ENCODE measurements at regions of chr15 and their contacts with region 1.

Region 1: GRCh38 chr15:23606226-23606625 is 40.8 kb downstream of the MKRN3 start:
- DNase-seq: no peak
- H3K4me3 ChIP-seq: no peak overlapping the region
- H3K27ac ChIP-seq: no peak overlapping the region
- H3K4me1 ChIP-seq: no peaks in the 10 kb centered on the region
- H3K27me3 ChIP-seq: 0 out of 2 replicates have a peak, but pooled peaks cover 2% of the 10 kb centered on the region
- CTCF ChIP-seq: no peak

Region 2: GRCh38 chr15:22980189-22981050 is 625.8 kb before region 1 on chr15 and contains the start of gene CYFIP1:
- CTCF ChIA-PET with region 1: no interaction called
- POLR2A ChIA-PET with region 1: no interaction called
- intact Hi-C with region 1: no loop called
- DNase-seq: peak; percentile 66 to 90
- H3K4me3 ChIP-seq: peak within 1 kb of the TSS; percentile 77
- H3K27ac ChIP-seq: peak within 1 kb of the TSS; percentile 33; the same call in 1 of the 2 replicates
- H3K4me1 ChIP-seq: 0 out of 2 replicates have a peak, but pooled peaks cover 4% of the 10 kb centered on the region
- H3K27me3 ChIP-seq: no peaks in the 10 kb centered on the region
- CTCF ChIP-seq: no peak
- total RNA-seq, gene CYFIP1: 114 TPM in 2 replicates

Region 3: DNA sequence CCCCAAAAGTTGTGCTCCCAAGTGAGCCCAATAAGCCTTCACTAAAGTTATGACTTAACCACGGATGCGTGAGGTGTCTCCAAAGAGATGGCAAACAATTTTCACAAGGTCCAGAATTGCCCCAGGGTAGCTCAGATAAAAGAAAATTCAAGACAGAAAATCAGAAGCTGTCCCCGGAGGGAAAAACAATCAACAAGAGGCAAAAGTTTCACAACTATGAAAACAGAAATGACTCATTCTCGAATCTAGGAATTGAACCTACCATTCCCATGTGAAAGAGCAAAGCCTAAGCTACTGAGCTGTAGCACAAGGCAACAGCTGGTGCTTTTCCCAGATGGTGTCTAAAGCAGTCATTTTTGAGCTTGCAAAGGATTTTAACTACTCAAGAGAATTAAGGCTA is 74.2 kb before region 1 on chr15:
- CTCF ChIA-PET with region 1: no interaction called
- POLR2A ChIA-PET with region 1: no interaction called
- intact Hi-C with region 1: no loop called
- DNase-seq: peak in 1 of 2 experiments; percentile 67
- H3K4me3 ChIP-seq: no peak overlapping the region
- H3K27ac ChIP-seq: no peak overlapping the region
- H3K4me1 ChIP-seq: no peaks in the 10 kb centered on the region
- H3K27me3 ChIP-seq: no peaks in the 10 kb centered on the region
- CTCF ChIP-seq: no peak

Region 4: DNA sequence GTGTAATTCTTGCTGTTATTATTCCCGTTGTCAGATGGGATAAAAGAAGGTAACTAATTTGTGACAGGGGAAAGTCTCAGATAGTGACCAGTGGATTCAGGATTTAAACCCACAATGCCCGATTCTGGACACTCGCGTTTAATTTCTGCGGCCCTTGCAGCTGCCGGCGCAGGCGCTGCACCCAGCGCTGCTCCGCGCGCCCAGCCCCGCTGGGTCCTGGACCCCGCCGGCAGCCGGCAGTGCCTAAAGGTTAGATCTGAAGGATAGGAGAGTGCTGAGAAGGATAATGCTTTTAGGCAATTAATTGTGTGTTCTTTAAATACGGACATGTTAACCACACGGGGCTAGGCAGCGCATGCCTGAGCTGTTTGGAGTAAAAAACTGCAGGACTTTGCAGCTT is 44.3 kb before region 1 on chr15:
- CTCF ChIA-PET with region 1: no interaction called
- POLR2A ChIA-PET with region 1: no interaction called
- intact Hi-C with region 1: loop called (anchors 10 kb)
- DNase-seq: no peak
- H3K4me3 ChIP-seq: no peak overlapping the region
- H3K27ac ChIP-seq: no peak overlapping the region
- H3K4me1 ChIP-seq: 0 out of 2 replicates have a peak, but pooled peaks cover under 1% of the 10 kb centered on the region
- H3K27me3 ChIP-seq: no peaks in the 10 kb centered on the region
- CTCF ChIP-seq: no peak

Region 5: DNA sequence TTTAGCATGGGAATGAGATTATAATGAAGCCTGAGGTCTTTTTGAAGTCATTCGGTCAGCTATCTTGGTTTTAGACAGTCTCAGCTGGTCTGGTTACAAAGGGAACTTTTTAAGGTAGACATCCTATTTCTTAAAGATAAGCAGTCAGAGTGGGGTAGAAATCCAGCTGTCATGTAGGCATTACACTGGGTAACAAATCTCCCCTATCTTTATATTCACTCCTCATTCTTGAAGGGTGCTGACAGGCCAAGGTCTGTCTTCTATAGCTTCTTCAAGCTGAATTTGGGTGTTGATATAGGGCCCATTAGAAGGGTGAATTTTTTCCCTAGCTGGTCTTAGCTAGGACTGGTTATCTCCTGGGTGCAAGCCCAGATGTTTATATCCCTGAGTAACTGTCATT is 102.1 kb after region 1 on chr15:
- CTCF ChIA-PET with region 1: no interaction called
- POLR2A ChIA-PET with region 1: no interaction called
- intact Hi-C with region 1: no loop called
- DNase-seq: no peak
- H3K4me3 ChIP-seq: no peak overlapping the region
- H3K27ac ChIP-seq: no peak overlapping the region
- H3K4me1 ChIP-seq: no peaks in the 10 kb centered on the region
- H3K27me3 ChIP-seq: no peaks in the 10 kb centered on the region; the same call in 1 of the 2 replicates
- CTCF ChIP-seq: no peak

Measured in PC-9 (cell line).